Lower leg skin (tissue), 4 donors: ENCODE measurements at regions of chr11 and their contacts with region 1.

Region 1: DNA sequence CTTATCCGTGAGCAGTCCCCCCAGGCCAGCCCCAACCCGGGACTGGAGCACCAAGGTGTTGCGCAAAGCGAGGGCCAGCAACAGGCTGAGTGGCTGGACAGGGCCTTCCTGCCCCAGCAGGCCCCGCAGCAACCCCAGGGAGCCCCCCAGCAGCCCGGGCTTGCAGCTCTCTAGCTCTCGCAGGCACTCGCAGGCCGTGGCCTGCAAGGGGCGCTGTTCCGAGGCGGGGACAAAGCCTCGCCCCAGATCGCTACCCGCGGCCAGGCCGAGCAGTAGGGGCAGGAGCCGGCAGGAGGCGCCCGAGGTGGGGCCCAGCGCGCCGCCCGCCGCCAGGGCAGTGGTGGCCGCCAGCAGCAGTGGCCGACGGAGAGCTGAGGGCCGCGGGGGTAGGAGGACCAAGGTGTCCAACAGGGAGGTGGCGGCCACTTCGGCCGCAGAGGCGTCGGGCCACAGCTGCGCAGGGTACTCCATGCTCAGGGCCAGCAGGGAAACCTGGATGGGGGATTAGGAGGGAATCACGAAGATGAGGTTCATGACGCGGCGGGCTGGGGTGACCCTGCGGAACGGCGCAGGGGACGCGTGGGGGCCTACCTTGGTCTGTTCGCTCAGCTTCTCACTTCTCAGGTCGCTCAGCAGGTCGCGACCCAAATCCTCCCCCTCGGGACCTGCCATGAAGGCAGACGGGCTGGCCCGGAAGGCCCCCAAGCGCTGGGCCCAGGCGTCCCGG is 762 bp downstream of the AP5B1 start:
- DNase-seq: peak in 1 of 2 donors; percentile 94
- H3K4me3 ChIP-seq: peak overlapping the region; percentile 76
- CTCF ChIP-seq: peak in 2 of 3 donors; percentile 16 to 92
- POLR2A ChIP-seq: no peak

Region 2: GRCh38 chr11:65652511-65653231 is 127.3 kb before region 1 on chr11:
- intact Hi-C with region 1: no loop called
- DNase-seq: peak; percentile 90 to 99
- H3K4me3 ChIP-seq: no peak overlapping the region
- CTCF ChIP-seq: no peak
- POLR2A ChIP-seq: no peak

Region 3: GRCh38 chr11:65817835-65818742 is 38.1 kb after region 1 on chr11:
- intact Hi-C with region 1: loop called (anchors 10 kb)
- DNase-seq: peak; percentile 90 to 99
- H3K4me3 ChIP-seq: peak overlapping the region; percentile 52
- CTCF ChIP-seq: peak in 2 of 3 donors; percentile 62 to 97
- POLR2A ChIP-seq: no peak